Activated T-helper 1 cell treated with anti-CD3 and anti-CD28 coated beads, Interleukin-12 subunit alpha, Interleukin-12 subunit beta, Interleukin-2, Interleukin-4 antibody, amounts not matched to agents 30 ng/mL and 10 ng/mL and 1 ng/mL, durations not matched to agents 14 hours and 24 hours and 36 hours (primary cell): ENCODE measurements at regions of chr1 and their contacts with region 1.

Region 1: DNA sequence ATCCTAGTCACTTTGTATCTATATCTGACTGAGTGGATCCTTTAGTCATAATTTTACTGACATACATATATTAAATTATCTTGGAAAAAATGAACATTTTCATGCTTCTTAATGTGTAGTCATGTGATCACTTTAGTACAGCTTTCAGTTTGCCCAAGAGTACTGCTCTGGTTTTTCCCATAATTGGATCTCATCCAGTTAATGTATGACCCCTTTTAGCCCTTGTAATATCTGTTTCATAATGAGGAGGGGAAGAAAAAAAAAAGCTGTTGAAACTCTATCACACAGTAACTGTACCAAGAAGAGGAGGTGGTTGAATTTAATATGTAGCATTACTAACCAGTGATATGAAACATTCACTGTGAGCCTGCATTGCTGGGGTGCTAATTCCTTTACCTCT is 328.7 kb downstream of the PTPRC start:
- DNase-seq: no peak
- H3K4me3 Mint-ChIP-seq: no peak overlapping the region
- H3K27ac Mint-ChIP-seq: peak overlapping the region; percentile 31
- H3K4me1 Mint-ChIP-seq: peaks cover 67% of the 10 kb centered on the region
- H3K27me3 Mint-ChIP-seq: no peaks in the 10 kb centered on the region

Region 2: GRCh38 chr1:198977909-198978308 is 10.3 kb after region 1 on chr1:
- intact Hi-C with region 1: loop called (anchors 2 kb)
- DNase-seq: no peak
- H3K4me3 Mint-ChIP-seq: no peak overlapping the region
- H3K27ac Mint-ChIP-seq: no peak overlapping the region
- H3K4me1 Mint-ChIP-seq: peaks cover 29% of the 10 kb centered on the region
- H3K27me3 Mint-ChIP-seq: peaks cover 2% of the 10 kb centered on the region